K562 (cell line): ENCODE measurements at regions of chr1 and their contacts with region 1.

Region 1: DNA sequence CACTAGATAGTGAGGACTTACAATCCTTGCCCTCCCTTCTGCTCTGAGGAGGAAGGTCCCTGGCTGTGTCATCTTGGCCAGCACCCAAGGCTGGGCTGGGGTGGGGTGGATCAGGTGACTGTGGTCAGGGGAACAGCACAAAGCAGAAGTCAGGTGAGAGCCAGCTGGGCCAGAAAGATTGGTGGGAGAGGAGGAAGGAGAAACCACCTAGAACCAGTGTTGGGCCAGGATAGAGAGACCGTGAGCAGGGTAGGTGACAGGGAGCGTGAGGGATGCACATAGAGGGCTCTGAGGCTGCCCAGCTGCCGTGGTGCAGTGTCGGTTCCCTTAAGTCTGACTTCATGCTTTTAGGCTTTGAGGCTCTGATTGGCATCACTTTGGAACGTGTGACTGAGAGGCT is 22.7 kb downstream of the NCF2 start:
- DNase-seq: peak; percentile 34 to 81 (median 58)
- ATAC-seq: peak; percentile 81
- H3K4me3 ChIP-seq: no peak overlapping the region
- H3K27ac ChIP-seq: no peak overlapping the region
- H3K4me1 ChIP-seq: peaks cover 10 to 13% of the 10 kb centered on the region in 2 experiments
- H3K27me3 ChIP-seq: peaks cover 19 to 32% of the 10 kb centered on the region in 2 experiments
- CTCF ChIP-seq: no peak
- EP300 ChIP-seq: peak; percentile 77
- POLR2A ChIP-seq: no peak
- RAD21 ChIP-seq: no peak

Region 2: DNA sequence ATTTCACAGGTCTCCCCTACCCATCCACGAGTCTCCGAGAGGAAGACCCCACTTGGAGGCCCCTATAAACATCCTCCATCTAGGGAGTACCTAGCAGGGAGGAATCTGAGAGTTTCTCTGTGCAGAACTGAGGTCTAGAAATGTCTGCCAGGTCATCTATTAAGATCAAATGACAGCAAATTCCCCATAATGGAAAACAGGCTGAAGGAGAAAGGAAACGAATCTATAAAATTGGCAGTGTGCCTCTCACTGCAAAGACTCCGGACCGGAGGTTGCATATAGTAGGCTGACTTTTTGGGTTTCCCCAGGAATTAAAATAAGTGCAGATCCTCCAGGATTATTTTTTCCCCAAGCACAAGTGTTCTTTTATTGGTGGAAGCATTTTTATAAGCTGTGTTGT is 207.1 kb before region 1 on chr1:
- CTCF ChIA-PET with region 1: no interaction called
- POLR2A ChIA-PET with region 1: no interaction called
- in situ Hi-C with region 1: no loop called
- intact Hi-C with region 1: no loop called
- DNase-seq: no peak
- ATAC-seq: no peak
- H3K4me3 ChIP-seq: no peak overlapping the region
- H3K27ac ChIP-seq: no peak overlapping the region
- H3K4me1 ChIP-seq: no peaks in the 10 kb centered on the region
- H3K27me3 ChIP-seq: peaks cover 2% of the 10 kb centered on the region in 2 experiments; a peak in 1 of 5 replicates
- CTCF ChIP-seq: no peak
- EP300 ChIP-seq: no peak
- POLR2A ChIP-seq: no peak
- RAD21 ChIP-seq: no peak

Region 3: GRCh38 chr1:183554577-183554976 is 13.0 kb before region 1 on chr1:
- CTCF ChIA-PET with region 1: no interaction called
- POLR2A ChIA-PET with region 1: interaction called, 14 read pairs
- in situ Hi-C with region 1: no loop called
- intact Hi-C with region 1: no loop called
- DNase-seq: no peak
- ATAC-seq: no peak
- H3K4me3 ChIP-seq: no peak overlapping the region
- H3K27ac ChIP-seq: no peak overlapping the region
- H3K4me1 ChIP-seq: peaks cover 6 to 12% of the 10 kb centered on the region in 2 experiments; a peak in 4 of 5 replicates
- H3K27me3 ChIP-seq: no peaks in the 10 kb centered on the region
- CTCF ChIP-seq: no peak
- EP300 ChIP-seq: no peak
- POLR2A ChIP-seq: no peak
- RAD21 ChIP-seq: no peak

Region 4: GRCh38 chr1:183580281-183580682 is 12.7 kb after region 1 on chr1:
- CTCF ChIA-PET with region 1: no interaction called
- POLR2A ChIA-PET with region 1: interaction called, 19 read pairs
- in situ Hi-C with region 1: no loop called
- intact Hi-C with region 1: no loop called
- DNase-seq: peak in 3 of 4 experiments; percentile 30 to 54 (median 48)
- ATAC-seq: peak; percentile 82
- H3K4me3 ChIP-seq: no peak overlapping the region
- H3K27ac ChIP-seq: no peak overlapping the region
- H3K4me1 ChIP-seq: peaks cover 3 to 9% of the 10 kb centered on the region in 2 experiments; a peak in 3 of 5 replicates
- H3K27me3 ChIP-seq: peaks cover 44 to 46% of the 10 kb centered on the region in 2 experiments
- CTCF ChIP-seq: peak; percentile 40 to 60 (median 46); a peak in 5 of 6 replicates
- EP300 ChIP-seq: no peak
- POLR2A ChIP-seq: no peak
- RAD21 ChIP-seq: peak in 1 of 2 experiments; percentile 52; a peak in 2 of 4 replicates

Region 5: GRCh38 chr1:183652547-183653461 is 85.2 kb after region 1 on chr1 and contains the start of gene APOBEC4:
- CTCF ChIA-PET with region 1: no interaction called
- POLR2A ChIA-PET with region 1: no interaction called
- in situ Hi-C with region 1: no loop called
- intact Hi-C with region 1: no loop called
- DNase-seq: no peak
- ATAC-seq: no peak
- H3K4me3 ChIP-seq: no peak within 1 kb of the TSS
- H3K27ac ChIP-seq: no peak within 1 kb of the TSS
- H3K4me1 ChIP-seq: no peaks in the 10 kb centered on the region
- H3K27me3 ChIP-seq: peaks cover 2 to 19% of the 10 kb centered on the region in 2 experiments; a peak in 3 of 5 replicates
- CTCF ChIP-seq: no peak
- EP300 ChIP-seq: no peak
- POLR2A ChIP-seq: no peak
- RAD21 ChIP-seq: no peak
- polyA plus RNA-seq, gene APOBEC4: not detected